ENCODE measurements at regions of chr1 and their contacts with region 1.

Region 1: DNA sequence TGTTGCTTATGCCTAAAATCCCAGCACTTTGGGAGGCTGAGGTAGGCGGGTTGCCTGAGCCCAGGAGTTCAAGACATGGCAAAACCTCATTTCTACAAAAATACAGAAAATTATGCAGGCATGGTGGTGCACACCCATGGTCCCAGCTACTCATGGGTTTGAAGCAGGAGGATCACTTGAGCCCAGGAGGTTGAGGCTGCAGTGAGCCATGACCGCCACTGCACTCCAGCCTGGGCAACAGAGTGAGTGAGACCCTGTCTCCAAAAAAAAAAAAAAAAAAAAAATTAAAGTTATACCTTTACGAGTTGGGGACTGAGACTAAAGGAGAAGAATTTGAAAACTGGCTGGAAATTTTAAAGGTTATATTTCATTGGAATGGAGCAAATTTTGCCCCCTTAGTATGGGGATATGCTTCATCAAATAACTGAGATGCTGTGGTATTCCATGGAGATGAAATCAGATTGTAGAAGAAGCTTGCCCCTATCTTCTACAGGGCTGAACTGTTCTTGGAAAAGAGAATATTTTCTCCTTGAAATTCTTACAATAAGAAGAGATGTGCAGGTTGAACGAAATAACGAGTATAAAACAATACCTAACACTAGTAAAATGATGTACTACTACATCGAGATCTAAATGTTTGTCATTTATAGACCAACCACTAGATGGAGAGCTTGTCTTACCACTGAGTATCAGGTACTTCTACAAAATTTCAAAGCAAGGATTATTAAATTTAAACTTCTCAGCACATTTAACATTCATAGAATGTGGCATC is 34.9 kb upstream of the SCYL3 start:
- DNase-seq: no peak
- ATAC-seq: peak in 3 of 4 donors; percentile 58 to 71 (median 63)
- H3K4me3 ChIP-seq: no peak overlapping the region
- H3K27ac ChIP-seq: no peak overlapping the region
- H3K4me1 ChIP-seq: peaks cover 0 to 20% (median 6%) of the 10 kb centered on the region in 12 donors
- H3K27me3 ChIP-seq: no peaks in the 10 kb centered on the region
- CTCF ChIP-seq: peak; percentile 65 to 86 (median 69)
- POLR2A ChIP-seq: no peak

Region 2: GRCh38 chr1:169670836-169671235 is 257.8 kb before region 1 on chr1:
- intact Hi-C with region 1: no loop called
- DNase-seq: no peak
- ATAC-seq: peak in 1 of 4 donors; percentile 39
- H3K4me3 ChIP-seq: no peak overlapping the region
- H3K27ac ChIP-seq: no peak overlapping the region
- H3K4me1 ChIP-seq: peaks cover 0 to 18% (median 0%) of the 10 kb centered on the region in 12 donors
- H3K27me3 ChIP-seq: no peaks in the 10 kb centered on the region
- CTCF ChIP-seq: no peak
- POLR2A ChIP-seq: no peak

Region 3: DNA sequence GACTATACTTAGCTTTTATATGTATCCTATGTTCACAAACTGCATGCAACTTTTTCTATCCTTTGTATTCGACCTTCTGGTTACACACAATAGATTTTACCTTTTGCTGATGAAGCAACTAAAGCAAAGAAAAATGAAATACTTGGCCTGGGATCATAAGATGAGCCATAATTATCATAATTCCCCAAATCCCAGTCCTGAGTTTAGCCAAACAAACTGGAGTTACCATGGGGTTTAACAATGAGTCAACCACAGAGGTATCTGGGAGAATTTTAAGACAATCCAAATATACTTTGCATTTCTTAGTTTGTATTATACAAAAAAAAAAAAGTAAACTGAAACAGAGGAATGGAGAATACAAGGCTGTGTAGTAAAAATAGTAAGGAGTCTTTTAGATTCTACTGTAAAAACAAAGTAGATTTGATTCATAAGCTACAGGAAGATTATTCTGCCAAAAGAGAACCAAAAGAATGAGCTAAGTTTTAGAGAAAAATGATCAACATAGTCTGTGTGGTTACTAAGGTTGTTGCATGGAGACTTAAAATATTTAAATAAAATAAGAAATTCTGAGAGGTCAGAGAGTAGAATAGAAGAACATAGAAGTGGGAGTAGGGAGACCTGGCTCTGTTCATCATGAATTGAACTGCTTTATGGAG is 542.9 kb after region 1 on chr1:
- intact Hi-C with region 1: loop called in 1 of 10 experiments (anchors 5 kb)
- DNase-seq: no peak
- ATAC-seq: no peak
- H3K4me3 ChIP-seq: no peak overlapping the region
- H3K27ac ChIP-seq: peak overlapping the region in 2 of 12 donors; percentile 2
- H3K4me1 ChIP-seq: peaks cover 0 to 12% (median 0%) of the 10 kb centered on the region in 12 donors
- H3K27me3 ChIP-seq: no peaks in the 10 kb centered on the region
- CTCF ChIP-seq: no peak
- POLR2A ChIP-seq: no peak

Region 4: DNA sequence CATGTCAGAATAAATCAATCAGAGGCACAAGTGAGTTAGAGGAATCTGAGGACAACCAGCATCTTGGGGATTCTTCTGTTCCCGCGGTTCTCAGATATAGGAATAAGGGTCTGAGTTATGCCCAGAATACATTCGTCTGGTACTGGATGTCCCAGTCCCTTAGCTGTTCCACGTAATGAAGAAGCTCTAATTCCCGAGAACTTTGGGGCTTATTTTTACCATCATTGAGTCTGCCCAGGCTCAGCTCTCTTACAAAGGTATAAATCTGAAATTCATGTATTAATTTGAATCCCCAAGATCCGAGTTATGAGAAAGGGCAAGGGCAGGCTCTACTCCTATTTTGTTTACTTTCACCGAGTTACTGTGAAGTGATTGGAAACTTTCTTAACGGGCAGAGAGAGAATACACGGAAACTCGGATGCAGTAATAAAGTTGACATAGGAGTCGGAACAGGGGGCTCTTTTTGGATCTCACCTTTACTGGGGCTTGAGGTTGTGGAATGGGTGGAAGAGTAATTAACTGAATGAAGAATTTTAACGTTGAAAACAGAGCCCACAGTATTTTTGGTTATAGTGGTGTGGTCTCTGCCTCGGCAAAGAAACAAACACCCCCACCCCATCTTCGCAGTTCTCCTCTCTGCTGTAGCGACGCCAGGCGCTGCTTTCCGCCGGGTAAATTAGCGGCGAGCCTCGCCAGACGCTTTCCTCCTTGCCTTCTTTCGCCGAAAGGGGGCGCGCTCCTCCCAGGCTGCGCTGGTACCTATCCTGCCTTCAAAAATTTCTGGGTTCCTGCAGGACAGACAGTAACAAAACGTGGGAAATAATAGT is 742.4 kb after region 1 on chr1:
- intact Hi-C with region 1: loop called in 4 of 10 experiments (anchors 10 kb)
- DNase-seq: peak in 4 of 5 donors; percentile 53 to 64 (median 56)
- ATAC-seq: peak; percentile 14 to 66 (median 46)
- H3K4me3 ChIP-seq: peak overlapping the region in 3 of 12 donors; percentile 16 to 25 (median 19)
- H3K27ac ChIP-seq: peak overlapping the region in 3 of 12 donors; percentile 3 to 15 (median 4)
- H3K4me1 ChIP-seq: peaks cover 0 to 67% (median 10%) of the 10 kb centered on the region in 12 donors
- H3K27me3 ChIP-seq: peaks cover 0 to 57% (median 4%) of the 10 kb centered on the region in 9 donors
- CTCF ChIP-seq: peak; percentile 21 to 72 (median 55)
- POLR2A ChIP-seq: no peak

Region 5: DNA sequence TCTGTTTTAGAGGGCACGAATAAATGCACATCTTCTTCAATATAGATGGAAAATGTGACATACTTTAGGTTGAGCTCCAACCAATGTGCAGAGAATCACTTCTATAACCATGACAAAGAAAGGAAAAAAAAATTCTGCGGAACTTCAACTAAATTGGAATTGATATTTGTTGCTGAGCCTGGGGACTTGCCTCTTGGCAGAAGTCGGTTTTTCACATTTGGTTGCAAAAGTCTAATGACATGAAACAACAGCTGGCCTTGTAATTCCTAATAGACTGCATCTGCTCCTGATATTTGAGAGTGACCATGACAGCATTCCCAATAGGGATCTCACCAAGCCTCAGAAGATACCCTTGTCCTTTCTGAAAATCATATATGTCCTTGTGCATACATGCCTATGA is 848.2 kb after region 1 on chr1:
- intact Hi-C with region 1: loop called in 2 of 10 experiments (anchors 10 kb)
- DNase-seq: peak in 2 of 5 donors; percentile 9 to 21
- ATAC-seq: peak in 2 of 4 donors; percentile 36 to 42
- H3K4me3 ChIP-seq: no peak overlapping the region
- H3K27ac ChIP-seq: peak overlapping the region in 4 of 12 donors; percentile 7 to 51 (median 39)
- H3K4me1 ChIP-seq: peaks cover 0 to 5% (median 0%) of the 10 kb centered on the region in 12 donors
- H3K27me3 ChIP-seq: no peaks in the 10 kb centered on the region
- CTCF ChIP-seq: no peak
- POLR2A ChIP-seq: no peak

Region 6: DNA sequence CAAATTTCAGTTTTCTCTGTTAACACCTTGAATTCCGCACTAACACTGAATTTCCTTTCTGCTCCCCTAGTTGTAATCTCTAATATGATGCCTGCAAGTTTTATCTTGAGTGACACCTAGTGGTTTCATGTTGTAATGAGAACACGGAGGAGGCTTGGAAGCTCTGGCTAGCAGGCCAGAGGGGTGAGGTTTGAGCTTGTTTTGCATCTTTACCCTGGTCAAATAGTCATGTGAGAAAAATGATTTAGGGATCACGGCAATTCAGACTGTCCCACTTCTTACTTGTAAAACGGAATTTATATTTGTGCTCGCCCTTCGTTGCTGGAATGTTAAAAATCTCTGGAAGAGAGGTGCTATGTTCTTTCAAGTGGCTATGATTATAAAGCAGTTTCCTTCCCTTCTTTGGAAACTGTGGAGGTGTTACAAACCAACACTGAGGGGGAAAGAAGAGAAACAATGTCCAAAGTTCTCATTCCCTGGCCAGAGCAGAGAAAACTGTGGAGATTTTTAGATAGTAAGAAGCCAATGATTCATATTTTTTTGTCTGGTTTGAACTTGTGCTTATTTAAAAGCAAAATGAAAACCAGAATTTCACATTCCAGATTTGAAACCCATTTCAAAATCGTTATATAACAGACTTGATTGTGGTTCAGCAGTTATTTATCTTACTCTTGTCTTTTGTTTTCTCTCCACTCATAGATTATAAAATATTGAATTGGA is 1001.4 kb after region 1 on chr1:
- intact Hi-C with region 1: loop called in 6 of 10 experiments (anchors 5 to 10 kb)
- DNase-seq: peak in 2 of 5 donors; percentile 16 to 21
- ATAC-seq: peak; percentile 86 to 95 (median 90)
- H3K4me3 ChIP-seq: peak overlapping the region in 2 of 12 donors; percentile 16 to 36
- H3K27ac ChIP-seq: peak overlapping the region in 8 of 12 donors; percentile 6 to 71 (median 42)
- H3K4me1 ChIP-seq: peaks cover 0 to 16% (median 5%) of the 10 kb centered on the region in 12 donors
- H3K27me3 ChIP-seq: no peaks in the 10 kb centered on the region
- CTCF ChIP-seq: peak; percentile 52 to 83 (median 71)
- POLR2A ChIP-seq: no peak